ENCODE measurements at regions of chr10 and their contacts with region 1.

Region 1: GRCh38 chr10:3805791-3806461 is 20.9 kb upstream of the KLF6 start:
- DNase-seq: peak in 13 of 35 experiments; percentile 12 to 67 (median 33)
- ATAC-seq: peak in 3 of 4 experiments; percentile 16 to 19 (median 17)
- H3K4me3 ChIP-seq: no peak overlapping the region
- H3K4me3 Mint-ChIP-seq: peak overlapping the region; percentile 39 to 75 (median 70)
- H3K27ac ChIP-seq: peak overlapping the region; percentile 98
- H3K27ac Mint-ChIP-seq: no peak overlapping the region
- H3K4me1 ChIP-seq: peaks cover 63 to 86% of the 10 kb centered on the region in 2 experiments
- H3K4me1 Mint-ChIP-seq: peaks cover 5 to 77% (median 65%) of the 10 kb centered on the region in 3 donors
- H3K27me3 ChIP-seq: no peaks in the 10 kb centered on the region
- H3K27me3 Mint-ChIP-seq: no peaks in the 10 kb centered on the region

Region 2: GRCh38 chr10:3776796-3777571 is 28.9 kb before region 1 on chr10:
- CTCF ChIA-PET with region 1: interaction called in 1 of 2 experiments, 6 read pairs
- POLR2A ChIA-PET with region 1: interaction called in 1 of 2 experiments, 240 read pairs
- DNase-seq: peak in 19 of 35 experiments; percentile 28 to 78 (median 47)
- ATAC-seq: peak; percentile 45 to 69 (median 62)
- H3K4me3 ChIP-seq: no peak overlapping the region
- H3K4me3 Mint-ChIP-seq: peak overlapping the region; percentile 8 to 64 (median 50)
- H3K27ac ChIP-seq: peak overlapping the region; percentile 99
- H3K27ac Mint-ChIP-seq: peak overlapping the region; percentile 75 to 89
- H3K4me1 ChIP-seq: peaks cover 24 to 73% of the 10 kb centered on the region in 2 experiments
- H3K4me1 Mint-ChIP-seq: peaks cover 66 to 77% (median 76%) of the 10 kb centered on the region in 3 donors
- H3K27me3 ChIP-seq: no peaks in the 10 kb centered on the region
- H3K27me3 Mint-ChIP-seq: no peaks in the 10 kb centered on the region

Region 3: GRCh38 chr10:3820255-3820654 is 14.3 kb after region 1 on chr10:
- CTCF ChIA-PET with region 1: no interaction called
- POLR2A ChIA-PET with region 1: no interaction called
- DNase-seq: no peak
- ATAC-seq: no peak
- H3K4me3 ChIP-seq: no peak overlapping the region
- H3K4me3 Mint-ChIP-seq: no peak overlapping the region
- H3K27ac ChIP-seq: no peak overlapping the region
- H3K27ac Mint-ChIP-seq: no peak overlapping the region
- H3K4me1 ChIP-seq: no peaks in the 10 kb centered on the region
- H3K4me1 Mint-ChIP-seq: peaks cover 2 to 6% (median 3%) of the 10 kb centered on the region in 3 donors
- H3K27me3 ChIP-seq: no peaks in the 10 kb centered on the region
- H3K27me3 Mint-ChIP-seq: no peaks in the 10 kb centered on the region

Region 4: GRCh38 chr10:4131407-4132228 is 325.7 kb after region 1 on chr10:
- CTCF ChIA-PET with region 1: no interaction called
- POLR2A ChIA-PET with region 1: interaction called in 1 of 2 experiments, 11 read pairs
- DNase-seq: peak in 14 of 35 experiments; percentile 7 to 78 (median 22)
- ATAC-seq: peak; percentile 89 to 95 (median 92)
- H3K4me3 ChIP-seq: peak overlapping the region in 1 of 2 donors; percentile 6
- H3K4me3 Mint-ChIP-seq: no peak overlapping the region
- H3K27ac ChIP-seq: peak overlapping the region; percentile 49
- H3K27ac Mint-ChIP-seq: no peak overlapping the region
- H3K4me1 ChIP-seq: peaks cover 24 to 33% of the 10 kb centered on the region in 2 experiments
- H3K4me1 Mint-ChIP-seq: peaks cover 8 to 41% (median 30%) of the 10 kb centered on the region in 3 donors
- H3K27me3 ChIP-seq: no peaks in the 10 kb centered on the region
- H3K27me3 Mint-ChIP-seq: no peaks in the 10 kb centered on the region

Region 5: GRCh38 chr10:4316161-4316810 is 510.4 kb after region 1 on chr10:
- CTCF ChIA-PET with region 1: no interaction called
- POLR2A ChIA-PET with region 1: no interaction called
- DNase-seq: no peak
- ATAC-seq: no peak
- H3K4me3 ChIP-seq: no peak overlapping the region
- H3K4me3 Mint-ChIP-seq: no peak overlapping the region
- H3K27ac ChIP-seq: no peak overlapping the region
- H3K27ac Mint-ChIP-seq: no peak overlapping the region
- H3K4me1 ChIP-seq: no peaks in the 10 kb centered on the region
- H3K4me1 Mint-ChIP-seq: no peaks in the 10 kb centered on the region
- H3K27me3 ChIP-seq: no peaks in the 10 kb centered on the region
- H3K27me3 Mint-ChIP-seq: peaks cover 0 to 2% of the 10 kb centered on the region in 2 donors

Measured in T-cell (primary cell).